ENCODE measurements at regions of chr4 and their contacts with region 1.

Region 1: GRCh38 chr4:139554893-139555704 is 920 bp downstream of the SETD7 start:
- DNase-seq: peak; percentile 95
- ATAC-seq: peak; percentile 87

Region 2: DNA sequence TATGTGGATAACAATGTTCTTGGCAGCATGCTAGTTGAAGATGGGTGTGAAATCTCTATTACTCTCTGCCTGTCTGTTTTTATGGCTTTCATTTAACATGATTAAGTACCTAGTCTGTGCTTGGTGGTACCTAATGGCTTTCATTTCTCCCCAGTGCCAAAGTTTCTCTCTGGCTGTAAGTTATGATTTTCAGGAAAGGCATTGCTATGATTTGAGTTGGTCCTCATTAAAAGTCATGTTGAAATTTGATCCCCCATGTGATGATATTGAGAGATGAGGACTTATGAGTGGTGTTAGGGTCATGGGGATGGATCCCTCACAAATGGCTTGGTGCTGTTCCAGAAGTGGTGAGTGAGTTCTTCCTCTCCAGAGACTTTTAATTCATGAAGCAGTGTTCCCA is 1918.9 kb after region 1 on chr4:
- intact Hi-C with region 1: loop called (anchors 5 kb)
- DNase-seq: no peak
- ATAC-seq: peak; percentile 80

Measured in sciatic nerve (tissue), 2 donors.